Naive thymus-derived CD4-positive, alpha-beta T cell (primary cell): ENCODE measurements at regions of chr6 and their contacts with region 1.

Region 1: GRCh38 chr6:90080876-90081481 is 186.7 kb downstream of the GJA10 start:
- DNase-seq: peak; percentile 24 to 87 (median 82)
- ATAC-seq: peak; percentile 86
- H3K4me3 ChIP-seq: peak overlapping the region; percentile 57
- H3K4me3 Mint-ChIP-seq: peak overlapping the region; percentile 84 to 99 (median 89)
- H3K27ac ChIP-seq: peak overlapping the region; percentile 84
- H3K27ac Mint-ChIP-seq: peak overlapping the region; percentile 90 to 99 (median 97)
- H3K4me1 ChIP-seq: peaks cover 54 to 71% of the 10 kb centered on the region in 2 donors
- H3K4me1 Mint-ChIP-seq: peaks cover 48 to 100% (median 92%) of the 10 kb centered on the region in 7 donors
- H3K27me3 ChIP-seq: no peaks in the 10 kb centered on the region
- H3K27me3 Mint-ChIP-seq: peaks cover 0 to 11% (median 0%) of the 10 kb centered on the region in 5 donors

Region 2: DNA sequence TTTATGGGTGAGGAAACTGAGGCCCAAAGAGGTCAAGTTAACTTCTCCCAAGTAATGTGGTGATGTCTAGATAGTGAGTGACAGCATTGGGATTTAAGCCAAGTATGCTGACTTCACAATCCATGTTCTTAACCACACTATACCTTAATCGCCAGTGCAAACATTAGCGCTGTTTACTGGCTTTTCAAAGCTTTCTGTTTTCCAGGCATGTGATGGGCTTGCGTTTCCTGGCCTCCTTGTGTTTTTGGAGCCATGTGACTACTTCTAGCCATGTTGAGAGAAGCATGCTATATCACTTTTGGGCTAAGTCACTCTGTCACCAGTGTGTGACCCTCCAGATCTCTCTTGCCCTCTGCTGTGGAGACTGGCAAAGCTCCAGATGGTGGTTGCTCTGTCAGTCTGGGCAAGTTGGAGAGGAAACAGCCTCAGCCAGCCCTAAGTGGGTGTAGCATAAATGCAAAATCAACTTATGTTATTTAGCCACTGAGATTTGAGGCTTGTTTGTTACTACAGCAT is 571.2 kb before region 1 on chr6:
- CTCF ChIA-PET with region 1: no interaction called
- POLR2A ChIA-PET with region 1: no interaction called
- intact Hi-C with region 1: no loop called
- DNase-seq: no peak
- ATAC-seq: no peak
- H3K4me3 ChIP-seq: no peak overlapping the region
- H3K4me3 Mint-ChIP-seq: no peak overlapping the region
- H3K27ac ChIP-seq: no peak overlapping the region
- H3K27ac Mint-ChIP-seq: no peak overlapping the region
- H3K4me1 ChIP-seq: no peaks in the 10 kb centered on the region
- H3K4me1 Mint-ChIP-seq: peaks cover 0 to 4% (median 0%) of the 10 kb centered on the region in 7 donors
- H3K27me3 ChIP-seq: no peaks in the 10 kb centered on the region
- H3K27me3 Mint-ChIP-seq: peaks cover 0 to 2% (median 0%) of the 10 kb centered on the region in 5 donors

Region 3: DNA sequence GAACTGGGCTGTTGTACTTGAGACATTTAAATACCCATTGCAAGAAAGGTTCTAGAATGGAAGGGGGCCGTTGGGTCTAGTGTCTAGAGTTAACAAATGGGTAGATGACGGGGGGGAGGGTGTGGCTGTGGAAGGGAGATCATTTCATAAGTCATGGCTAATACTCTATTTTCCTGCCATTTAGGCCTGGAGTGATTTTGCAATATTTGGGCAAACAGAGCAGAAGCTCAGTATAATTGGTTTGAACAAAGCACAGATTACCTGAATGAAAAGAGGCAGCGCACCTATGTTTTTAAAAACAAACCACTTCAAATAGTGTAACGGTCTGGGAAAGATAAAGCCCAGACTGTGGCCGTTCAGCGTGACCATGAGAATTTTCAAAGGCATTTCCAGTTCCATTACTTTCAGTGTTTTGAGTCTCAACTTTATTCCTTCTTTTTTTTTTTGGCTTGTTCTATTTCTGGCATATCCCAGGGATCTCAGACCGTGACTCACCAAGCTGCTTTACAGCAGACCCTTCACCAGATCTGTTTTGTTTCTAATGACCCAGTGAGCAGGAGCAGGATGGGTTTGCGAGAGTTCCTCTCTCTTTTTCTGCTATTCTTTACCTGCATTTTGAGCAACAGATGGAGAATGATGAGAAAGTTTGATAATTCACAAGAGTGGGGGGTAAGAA is 516.1 kb before region 1 on chr6:
- CTCF ChIA-PET with region 1: no interaction called
- POLR2A ChIA-PET with region 1: no interaction called
- intact Hi-C with region 1: no loop called
- DNase-seq: no peak
- ATAC-seq: no peak
- H3K4me3 ChIP-seq: no peak overlapping the region
- H3K4me3 Mint-ChIP-seq: no peak overlapping the region
- H3K27ac ChIP-seq: no peak overlapping the region
- H3K27ac Mint-ChIP-seq: no peak overlapping the region
- H3K4me1 ChIP-seq: no peaks in the 10 kb centered on the region
- H3K4me1 Mint-ChIP-seq: no peaks in the 10 kb centered on the region
- H3K27me3 ChIP-seq: no peaks in the 10 kb centered on the region
- H3K27me3 Mint-ChIP-seq: peaks cover 0 to 20% (median 0%) of the 10 kb centered on the region in 5 donors

Region 4: GRCh38 chr6:89952686-89953085 is 128.3 kb before region 1 on chr6:
- CTCF ChIA-PET with region 1: interaction called, 5 read pairs
- POLR2A ChIA-PET with region 1: interaction called, 3 read pairs
- intact Hi-C with region 1: loop called in 1 of 2 experiments (anchors 1 kb)
- DNase-seq: peak in 8 of 9 donors; percentile 44 to 88 (median 85)
- ATAC-seq: peak; percentile 97
- H3K4me3 ChIP-seq: peak overlapping the region; percentile 9
- H3K4me3 Mint-ChIP-seq: peak overlapping the region; percentile 44 to 79 (median 69)
- H3K27ac ChIP-seq: peak overlapping the region; percentile 59
- H3K27ac Mint-ChIP-seq: peak overlapping the region; percentile 70 to 96 (median 93)
- H3K4me1 ChIP-seq: peaks cover 40 to 49% of the 10 kb centered on the region in 2 donors
- H3K4me1 Mint-ChIP-seq: peaks cover 40 to 78% (median 73%) of the 10 kb centered on the region in 7 donors
- H3K27me3 ChIP-seq: no peaks in the 10 kb centered on the region
- H3K27me3 Mint-ChIP-seq: no peaks in the 10 kb centered on the region

Region 5: GRCh38 chr6:90098001-90098531 is 17.1 kb after region 1 on chr6:
- CTCF ChIA-PET with region 1: interaction called, 5 read pairs
- POLR2A ChIA-PET with region 1: interaction called, 5 read pairs
- intact Hi-C with region 1: loop called (anchors 1 kb)
- DNase-seq: peak in 4 of 9 donors; percentile 18 to 58 (median 28)
- ATAC-seq: peak; percentile 72
- H3K4me3 ChIP-seq: no peak overlapping the region
- H3K4me3 Mint-ChIP-seq: peak overlapping the region in 9 of 10 donors; percentile 4 to 71 (median 37)
- H3K27ac ChIP-seq: peak overlapping the region; percentile 4
- H3K27ac Mint-ChIP-seq: peak overlapping the region in 8 of 9 donors; percentile 46 to 89 (median 78)
- H3K4me1 ChIP-seq: peaks cover 0 to 59% of the 10 kb centered on the region in 2 donors
- H3K4me1 Mint-ChIP-seq: peaks cover 49 to 97% (median 88%) of the 10 kb centered on the region in 7 donors
- H3K27me3 ChIP-seq: no peaks in the 10 kb centered on the region
- H3K27me3 Mint-ChIP-seq: peaks cover 0 to 4% (median 0%) of the 10 kb centered on the region in 5 donors

Region 6: GRCh38 chr6:90179190-90180169 is 98.5 kb after region 1 on chr6:
- CTCF ChIA-PET with region 1: interaction called, 7 read pairs
- POLR2A ChIA-PET with region 1: interaction called, 18 read pairs
- intact Hi-C with region 1: loop called (anchors 1 to 2 kb)
- DNase-seq: peak in 3 of 9 donors; percentile 39 to 53 (median 43)
- ATAC-seq: no peak
- H3K4me3 ChIP-seq: no peak overlapping the region
- H3K4me3 Mint-ChIP-seq: peak overlapping the region in 5 of 10 donors; percentile 8 to 83 (median 72)
- H3K27ac ChIP-seq: peak overlapping the region; percentile 64
- H3K27ac Mint-ChIP-seq: peak overlapping the region in 8 of 9 donors; percentile 58 to 97 (median 88)
- H3K4me1 ChIP-seq: peaks cover 0 to 69% of the 10 kb centered on the region in 2 donors
- H3K4me1 Mint-ChIP-seq: peaks cover 49 to 92% (median 86%) of the 10 kb centered on the region in 7 donors
- H3K27me3 ChIP-seq: no peaks in the 10 kb centered on the region
- H3K27me3 Mint-ChIP-seq: no peaks in the 10 kb centered on the region

Region 7: DNA sequence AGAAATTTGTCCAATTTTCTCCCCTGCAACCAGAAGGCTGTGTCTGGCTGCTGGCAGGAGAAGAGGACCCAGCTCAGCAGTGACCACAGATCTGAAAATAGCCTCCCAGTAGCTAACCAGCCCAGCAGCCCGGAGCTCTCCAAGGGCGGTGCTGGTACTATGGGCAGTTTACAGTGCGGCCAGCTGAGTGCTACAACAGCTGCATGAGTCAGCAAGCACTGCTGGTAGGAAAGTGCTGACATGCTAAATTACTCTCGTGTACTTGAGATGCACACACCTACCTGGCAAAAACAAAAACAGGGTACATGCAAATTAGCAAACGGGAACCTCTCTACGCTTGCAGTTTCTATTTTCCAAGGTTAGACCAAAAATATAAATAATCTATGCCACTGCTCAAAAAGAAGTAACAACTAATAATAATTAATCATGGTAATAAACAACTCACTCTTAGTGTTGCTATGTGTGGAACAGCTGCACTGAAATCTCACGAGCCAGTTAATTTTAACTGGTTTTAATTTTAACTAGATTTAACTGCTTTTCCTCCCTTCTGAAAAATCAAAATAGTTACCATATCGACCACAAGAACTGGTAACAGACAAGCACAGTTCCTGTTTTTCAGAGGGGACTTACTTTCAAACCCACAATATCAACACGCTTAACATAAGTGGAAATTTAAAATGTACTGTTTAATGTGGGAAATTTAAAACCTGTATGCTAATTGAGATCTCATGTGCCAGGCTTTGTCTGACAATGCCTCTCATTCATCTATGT is 204.8 kb after region 1 on chr6:
- CTCF ChIA-PET with region 1: no interaction called
- POLR2A ChIA-PET with region 1: interaction called, 10 read pairs
- intact Hi-C with region 1: loop called in 1 of 2 experiments (anchors 1 kb)
- DNase-seq: peak in 8 of 9 donors; percentile 53 to 87 (median 74)
- ATAC-seq: peak; percentile 68
- H3K4me3 ChIP-seq: peak overlapping the region; percentile 51
- H3K4me3 Mint-ChIP-seq: peak overlapping the region; percentile 83 to 94 (median 88)
- H3K27ac ChIP-seq: peak overlapping the region; percentile 81
- H3K27ac Mint-ChIP-seq: peak overlapping the region; percentile 89 to 100 (median 96)
- H3K4me1 ChIP-seq: peaks cover 21 to 72% of the 10 kb centered on the region in 2 donors
- H3K4me1 Mint-ChIP-seq: peaks cover 54 to 96% (median 92%) of the 10 kb centered on the region in 7 donors
- H3K27me3 ChIP-seq: no peaks in the 10 kb centered on the region
- H3K27me3 Mint-ChIP-seq: peaks cover 0 to 2% (median 0%) of the 10 kb centered on the region in 5 donors

Region 8: GRCh38 chr6:90586836-90587638 is 506.1 kb after region 1 on chr6 and contains the start of gene MAP3K7:
- CTCF ChIA-PET with region 1: no interaction called
- POLR2A ChIA-PET with region 1: no interaction called
- intact Hi-C with region 1: loop called in 1 of 2 experiments (anchors 10 kb)
- DNase-seq: peak; percentile 83 to 96 (median 93)
- ATAC-seq: peak; percentile 90
- H3K4me3 ChIP-seq: peak within 1 kb of the TSS; percentile 88
- H3K4me3 Mint-ChIP-seq: peak within 1 kb of the TSS; percentile 92 to 99 (median 96)
- H3K27ac ChIP-seq: peak within 1 kb of the TSS; percentile 93
- H3K27ac Mint-ChIP-seq: peak within 1 kb of the TSS; percentile 93 to 100 (median 99)
- H3K4me1 ChIP-seq: peaks cover 17 to 22% of the 10 kb centered on the region in 2 donors
- H3K4me1 Mint-ChIP-seq: peaks cover 24 to 49% (median 45%) of the 10 kb centered on the region in 7 donors
- H3K27me3 ChIP-seq: no peaks in the 10 kb centered on the region
- H3K27me3 Mint-ChIP-seq: peaks cover 5 to 36% (median 11%) of the 10 kb centered on the region in 5 donors
- total RNA-seq, gene MAP3K7: 16.1 to 38.5 (median 29.9) TPM